Vagina (tissue), 2 donors: ENCODE measurements at regions of chr3 and their contacts with region 1.

Region 1: DNA sequence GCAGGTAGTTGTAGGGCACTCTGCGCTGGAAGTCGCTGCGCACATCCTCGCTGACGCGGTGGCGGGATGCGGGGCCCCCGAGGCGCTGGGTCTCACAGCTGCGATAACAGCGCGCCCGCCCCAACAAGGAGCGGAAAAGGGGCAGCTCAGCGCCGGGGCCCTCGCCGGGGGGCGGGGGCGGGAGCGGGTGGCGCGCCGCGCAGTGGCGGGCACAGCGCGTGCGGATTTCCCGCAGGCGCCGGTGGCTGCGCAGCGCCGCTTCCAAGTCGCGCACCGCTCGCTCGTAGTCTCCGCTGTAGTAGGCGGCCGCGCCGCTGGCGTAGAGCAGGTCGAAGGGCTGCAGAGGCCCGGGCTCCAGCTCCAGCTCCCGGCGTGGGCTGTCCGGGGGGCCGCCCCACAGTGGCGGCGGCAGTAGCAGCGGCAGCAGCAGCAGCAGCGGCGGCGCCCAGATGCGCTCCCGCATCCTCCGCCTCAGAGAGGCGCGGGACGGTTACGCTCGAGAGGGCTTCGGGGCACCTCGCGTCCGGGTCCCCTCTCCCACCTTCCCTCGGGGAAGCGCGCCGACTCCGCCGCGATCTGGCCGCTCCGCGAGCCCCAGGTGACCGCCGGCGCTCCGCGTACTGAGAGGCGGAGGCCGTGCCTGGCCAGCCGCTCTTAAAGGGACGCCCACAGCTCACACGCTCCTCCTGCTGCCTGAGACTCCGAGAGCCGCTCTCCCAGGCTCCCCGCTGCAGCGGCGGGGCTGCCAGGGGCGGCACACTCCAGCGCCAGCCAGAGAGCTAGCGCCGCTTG is at the start of gene P3H2:
- DNase-seq: no peak
- H3K4me3 ChIP-seq: peak within 1 kb of the TSS; percentile 71 to 81
- H3K27ac ChIP-seq: peak within 1 kb of the TSS; percentile 89
- H3K4me1 ChIP-seq: peaks cover 47% of the 10 kb centered on the region
- H3K27me3 ChIP-seq: no peaks in the 10 kb centered on the region
- CTCF ChIP-seq: peak in 2 of 3 experiments; percentile 10 to 28
- POLR2A ChIP-seq: no peak
- total RNA-seq, gene P3H2: 41.7 TPM

Region 2: DNA sequence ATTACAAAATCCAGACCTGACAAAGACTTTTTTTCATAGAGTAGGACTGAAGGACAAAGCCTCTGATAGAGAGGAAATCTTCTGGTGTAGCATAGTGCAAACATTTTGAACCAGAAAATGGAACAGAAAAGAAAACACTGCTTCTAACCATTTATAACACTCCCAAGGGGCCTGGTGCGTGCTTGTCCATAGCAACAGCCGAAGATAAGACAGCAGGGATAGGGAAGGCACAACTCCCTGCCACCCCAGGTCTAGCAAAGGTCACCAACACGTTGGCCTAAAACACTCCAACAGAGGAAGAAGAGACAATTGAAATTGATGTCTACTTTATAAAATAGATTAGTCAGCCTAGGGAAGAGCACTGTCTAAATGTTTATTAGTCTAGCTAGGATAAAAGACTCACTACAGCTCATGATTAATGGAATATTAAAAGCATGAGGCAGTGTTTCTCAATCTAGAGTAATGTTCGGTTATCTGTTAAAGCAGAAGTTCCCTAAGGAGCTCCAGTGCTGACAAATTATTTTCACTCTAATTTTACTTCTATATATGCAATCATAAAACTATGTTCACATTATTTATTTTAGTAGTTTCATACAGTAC is 145.0 kb before region 1 on chr3:
- intact Hi-C with region 1: loop called (anchors 10 kb)
- DNase-seq: no peak
- H3K4me3 ChIP-seq: no peak overlapping the region
- H3K27ac ChIP-seq: no peak overlapping the region
- H3K4me1 ChIP-seq: no peaks in the 10 kb centered on the region
- H3K27me3 ChIP-seq: no peaks in the 10 kb centered on the region
- CTCF ChIP-seq: no peak
- POLR2A ChIP-seq: no peak

Region 3: DNA sequence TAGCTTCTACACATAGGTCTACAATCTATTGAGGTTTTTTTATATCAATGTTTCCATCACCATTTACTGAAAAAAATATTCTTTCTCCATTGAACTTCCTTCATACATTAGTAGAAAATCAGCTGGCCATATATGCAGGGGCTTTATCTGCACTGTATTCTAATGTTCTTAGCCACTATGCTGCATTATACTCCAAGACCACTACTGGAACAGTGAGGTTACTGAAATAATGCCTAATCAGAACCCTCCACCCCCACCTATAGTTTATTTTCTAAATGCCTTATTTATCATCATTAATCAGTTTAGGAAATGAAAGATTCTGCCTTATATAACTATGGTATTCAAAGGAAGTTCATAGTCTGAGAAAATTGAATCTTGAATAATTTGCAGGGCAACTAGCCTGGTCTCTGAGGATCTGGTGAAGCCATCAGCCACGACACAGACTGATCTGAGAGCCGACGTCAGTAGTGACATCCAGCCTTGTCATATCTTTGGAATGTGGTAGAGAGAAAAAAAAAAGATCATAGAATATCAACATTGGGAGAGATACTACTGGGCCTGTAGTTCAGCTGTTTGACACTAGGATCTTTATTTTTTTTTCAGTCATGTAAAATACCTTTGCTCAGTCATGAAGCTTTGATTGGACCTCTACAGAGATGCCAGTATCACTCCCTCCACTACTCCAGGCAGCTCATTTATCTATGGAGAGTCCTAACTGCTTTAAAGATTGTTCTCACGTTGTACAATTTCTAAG is 66.4 kb before region 1 on chr3:
- intact Hi-C with region 1: loop called (anchors 10 kb)
- DNase-seq: no peak
- H3K4me3 ChIP-seq: no peak overlapping the region
- H3K27ac ChIP-seq: no peak overlapping the region
- H3K4me1 ChIP-seq: peaks cover 15% of the 10 kb centered on the region
- H3K27me3 ChIP-seq: no peaks in the 10 kb centered on the region
- CTCF ChIP-seq: no peak
- POLR2A ChIP-seq: no peak

Region 4: GRCh38 chr3:191727338-191727737 is 1606.9 kb after region 1 on chr3:
- intact Hi-C with region 1: no loop called
- DNase-seq: no peak
- H3K4me3 ChIP-seq: no peak overlapping the region
- H3K27ac ChIP-seq: no peak overlapping the region
- H3K4me1 ChIP-seq: no peaks in the 10 kb centered on the region
- H3K27me3 ChIP-seq: no peaks in the 10 kb centered on the region
- CTCF ChIP-seq: no peak
- POLR2A ChIP-seq: no peak